Activated CD8-positive, alpha-beta T cell treated with anti-CD3 and anti-CD28 coated beads for 36 hours (primary cell): ENCODE measurements at regions of chr17 and their contacts with region 1.

Region 1: GRCh38 chr17:42276359-42276608 is at the start of gene STAT5B:
- DNase-seq: peak; percentile 64
- ATAC-seq: peak; percentile 65
- H3K4me3 Mint-ChIP-seq: peak within 1 kb of the TSS; percentile 97
- H3K27ac Mint-ChIP-seq: peak within 1 kb of the TSS; percentile 96
- H3K4me1 Mint-ChIP-seq: peaks cover 40% of the 10 kb centered on the region
- H3K27me3 Mint-ChIP-seq: no peaks in the 10 kb centered on the region
- CTCF ChIP-seq: no peak
- total RNA-seq, gene STAT5B: 128 to 129 TPM

Region 2: GRCh38 chr17:42287926-42288802 is 11.9 kb after region 1 on chr17 and contains the start of gene STAT5A:
- CTCF ChIA-PET with region 1: interaction called, 8 read pairs
- POLR2A ChIA-PET with region 1: interaction called, 52 read pairs
- intact Hi-C with region 1: no loop called
- DNase-seq: peak; percentile 90
- ATAC-seq: peak; percentile 76
- H3K4me3 Mint-ChIP-seq: peak within 1 kb of the TSS; percentile 84
- H3K27ac Mint-ChIP-seq: peak within 1 kb of the TSS; percentile 94
- H3K4me1 Mint-ChIP-seq: peaks cover 54% of the 10 kb centered on the region
- H3K27me3 Mint-ChIP-seq: no peaks in the 10 kb centered on the region
- CTCF ChIP-seq: no peak
- total RNA-seq, gene STAT5A: 163 to 190 TPM